AG04449 (cell line): ENCODE measurements at regions of chr21 and their contacts with region 1.

Region 1: GRCh38 chr21:32940079-32941014 is 85.4 kb upstream of the OLIG2 start:
- DNase-seq: no peak
- H3K4me3 ChIP-seq: no peak overlapping the region
- CTCF ChIP-seq: peak; percentile 70

Region 2: DNA sequence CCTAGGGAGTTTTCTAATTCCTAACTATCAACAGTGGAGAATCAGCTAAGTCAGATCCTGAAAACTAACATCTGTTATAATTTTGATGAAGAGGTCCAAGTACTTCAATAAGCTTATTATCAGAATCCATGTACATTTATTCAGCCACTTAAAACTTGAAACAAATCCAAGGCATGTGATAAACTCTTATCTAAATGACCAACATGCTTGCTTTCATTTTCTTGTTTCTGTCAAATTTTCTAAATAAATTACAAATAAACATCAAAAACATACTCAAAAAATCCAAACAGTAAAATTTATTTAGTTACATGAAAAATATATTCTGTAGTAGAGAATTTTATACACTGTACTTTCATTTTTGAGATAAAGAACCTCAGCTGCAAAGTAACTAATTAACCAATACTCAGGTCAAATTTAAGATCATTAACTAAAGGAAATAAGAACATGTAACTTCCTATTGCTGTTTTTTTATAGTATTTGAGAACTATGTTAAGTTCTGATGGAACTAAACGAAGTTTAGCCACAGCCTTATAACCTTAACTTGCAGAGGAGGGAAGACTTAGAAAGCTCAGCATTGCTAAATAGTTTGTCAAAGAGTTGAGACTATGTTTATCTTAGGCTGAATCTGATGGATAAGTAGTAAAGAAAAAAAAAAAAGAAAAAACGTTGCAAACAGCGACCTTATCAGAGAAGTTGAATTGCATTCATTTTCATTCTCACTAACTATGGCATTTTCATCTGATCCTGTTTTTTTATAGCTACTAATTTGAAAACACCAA is 257.5 kb before region 1 on chr21:
- CTCF ChIA-PET with region 1: no interaction called
- POLR2A ChIA-PET with region 1: no interaction called
- DNase-seq: no peak
- H3K4me3 ChIP-seq: no peak overlapping the region
- CTCF ChIP-seq: no peak

Region 3: GRCh38 chr21:32794644-32795079 is 145.7 kb before region 1 on chr21:
- CTCF ChIA-PET with region 1: no interaction called
- POLR2A ChIA-PET with region 1: no interaction called
- DNase-seq: no peak
- H3K4me3 ChIP-seq: no peak overlapping the region
- CTCF ChIP-seq: no peak

Region 4: GRCh38 chr21:32921632-32922230 is 18.6 kb before region 1 on chr21:
- CTCF ChIA-PET with region 1: interaction called, 11 read pairs
- POLR2A ChIA-PET with region 1: no interaction called
- DNase-seq: no peak
- H3K4me3 ChIP-seq: no peak overlapping the region
- CTCF ChIP-seq: peak; percentile 49

Region 5: GRCh38 chr21:32929633-32930038 is 10.7 kb before region 1 on chr21:
- CTCF ChIA-PET with region 1: interaction called, 19 read pairs
- POLR2A ChIA-PET with region 1: no interaction called
- DNase-seq: no peak
- H3K4me3 ChIP-seq: no peak overlapping the region
- CTCF ChIP-seq: no peak

Region 6: DNA sequence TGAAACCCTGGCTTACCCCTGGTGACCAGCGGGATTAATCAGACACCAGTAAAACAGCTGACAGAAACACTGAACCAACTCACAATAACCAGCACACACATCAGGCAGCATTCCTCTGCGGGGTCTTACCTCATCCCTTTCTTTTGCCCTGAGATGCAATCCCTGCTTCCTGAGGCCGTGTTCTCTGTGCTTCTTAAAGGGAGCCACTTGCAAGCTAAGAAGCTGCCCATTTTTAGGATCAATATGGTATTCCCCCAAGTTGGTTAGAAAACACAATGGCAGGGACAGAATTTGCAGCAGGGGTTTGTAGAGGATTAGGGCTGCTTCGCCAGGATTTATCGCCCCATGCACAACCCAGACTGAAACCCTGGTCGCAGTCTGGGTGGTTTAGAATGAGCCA is 10.7 kb after region 1 on chr21:
- CTCF ChIA-PET with region 1: interaction called, 13 read pairs
- POLR2A ChIA-PET with region 1: no interaction called
- DNase-seq: no peak
- H3K4me3 ChIP-seq: no peak overlapping the region
- CTCF ChIP-seq: no peak

Region 7: DNA sequence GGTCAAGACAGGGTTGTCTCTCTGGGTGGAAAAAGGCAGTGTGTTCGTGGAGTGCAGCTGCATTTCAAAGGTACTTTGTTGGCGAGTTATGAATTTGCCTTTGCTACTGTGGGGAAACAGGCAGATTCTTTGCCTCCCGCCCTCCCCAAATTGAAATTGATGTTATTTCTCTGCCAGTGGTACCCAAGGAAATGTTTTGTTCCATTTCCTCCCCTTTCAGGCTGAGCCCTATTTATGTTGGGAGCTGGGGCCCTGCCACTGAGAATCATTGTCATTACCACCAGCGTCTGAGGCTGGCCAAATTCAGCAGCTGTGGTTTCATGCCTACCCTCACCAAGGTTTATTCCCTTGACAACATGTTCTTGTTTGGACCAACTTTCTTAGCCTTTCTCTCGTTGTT is 36.9 kb after region 1 on chr21:
- CTCF ChIA-PET with region 1: interaction called, 10 read pairs
- POLR2A ChIA-PET with region 1: no interaction called
- DNase-seq: no peak
- H3K4me3 ChIP-seq: no peak overlapping the region
- CTCF ChIP-seq: no peak

Region 8: DNA sequence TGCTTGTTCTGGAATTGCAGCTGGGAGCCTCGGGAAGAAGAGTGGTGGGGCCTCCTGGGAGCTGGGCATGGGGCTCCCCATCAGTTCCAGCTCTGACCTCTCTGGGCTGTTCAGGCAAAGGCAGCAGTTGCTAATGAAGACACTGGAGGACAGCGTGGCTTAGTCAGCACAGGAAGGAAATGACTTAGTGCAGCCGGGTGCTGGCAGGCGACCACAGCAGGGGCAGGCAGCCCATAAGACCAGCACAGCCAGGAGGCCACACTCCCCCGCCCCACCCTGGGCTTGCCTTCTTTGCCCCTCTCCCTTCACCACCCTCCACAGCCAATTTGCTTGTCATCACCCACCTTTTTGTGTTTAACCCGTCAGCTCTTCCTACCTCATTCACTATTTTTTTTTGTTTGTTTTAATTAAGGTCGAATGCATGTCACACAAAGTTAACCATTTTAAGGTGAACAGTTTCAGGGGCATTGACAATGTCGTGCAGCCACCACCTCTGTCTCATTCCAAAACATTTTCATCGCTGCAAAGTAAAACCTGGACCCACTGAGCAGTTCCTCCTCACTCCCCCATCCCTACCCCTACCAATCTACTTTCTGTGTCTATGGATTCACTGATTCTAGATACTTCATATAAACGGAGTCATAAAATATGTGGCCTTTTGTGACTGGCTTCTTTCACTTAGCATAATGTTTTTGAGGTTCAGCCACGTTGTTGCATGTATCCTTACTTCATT is 96.2 kb after region 1 on chr21:
- CTCF ChIA-PET with region 1: no interaction called
- POLR2A ChIA-PET with region 1: no interaction called
- DNase-seq: no peak
- H3K4me3 ChIP-seq: no peak overlapping the region
- CTCF ChIP-seq: no peak

Region 9: GRCh38 chr21:33127154-33127893 is 187.0 kb after region 1 on chr21:
- CTCF ChIA-PET with region 1: interaction called, 45 read pairs
- POLR2A ChIA-PET with region 1: no interaction called
- DNase-seq: no peak
- H3K4me3 ChIP-seq: peak overlapping the region; percentile 43
- CTCF ChIP-seq: peak; percentile 81